CD8-positive, alpha-beta T cell (primary cell): ENCODE measurements at regions of chr11 and their contacts with region 1.

Region 1: DNA sequence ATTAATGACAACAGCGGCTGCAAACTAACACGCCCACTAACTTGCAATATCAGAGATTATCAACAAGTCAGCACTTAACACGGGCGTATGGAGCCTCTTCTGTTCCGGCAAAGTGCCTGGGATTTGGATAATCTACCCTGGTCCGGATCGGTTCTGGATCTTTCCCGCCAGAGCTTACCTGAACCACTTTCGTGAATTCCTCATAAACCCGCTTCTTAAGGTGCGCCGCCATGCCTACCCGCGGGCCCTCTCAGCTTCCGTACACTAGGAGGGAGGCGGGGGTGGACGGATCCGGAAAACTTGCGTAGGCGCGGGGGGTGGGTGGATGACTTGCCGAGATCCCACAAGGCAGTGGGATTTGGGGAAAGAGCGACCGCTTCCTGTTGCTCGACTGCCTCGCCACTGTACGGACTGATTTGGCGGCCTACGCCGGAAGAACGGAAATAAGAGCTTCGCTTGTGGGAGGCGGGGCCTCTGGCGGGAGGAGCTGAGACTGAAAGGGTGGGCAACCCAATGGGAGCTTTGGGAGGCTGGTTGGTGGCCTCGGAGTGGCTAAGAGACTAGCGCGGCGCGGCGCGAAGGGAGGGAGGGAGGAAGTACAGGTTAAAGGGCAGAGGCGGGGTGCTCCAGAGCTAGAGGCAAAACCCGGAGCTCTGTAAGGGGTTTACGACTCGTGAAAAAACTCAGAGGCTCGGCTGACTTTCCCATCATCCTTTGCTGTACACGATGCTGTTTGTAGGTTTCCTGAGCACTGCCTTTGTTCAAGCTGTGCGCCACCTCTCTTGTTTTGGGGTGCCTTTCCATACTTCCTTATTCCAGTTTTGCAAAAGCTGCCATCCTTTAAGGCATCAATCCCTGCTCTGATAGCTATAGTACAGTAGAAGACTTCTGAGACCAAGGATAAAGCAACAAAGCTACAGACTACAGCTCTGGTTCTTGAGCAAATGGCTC is at the start of gene INTS4:
- DNase-seq: peak; percentile 92 to 99 (median 97)
- ATAC-seq: peak; percentile 97
- H3K4me3 ChIP-seq: peak within 1 kb of the TSS; percentile 79 to 81
- H3K4me3 Mint-ChIP-seq: peak within 1 kb of the TSS; percentile 96
- H3K27ac ChIP-seq: peak within 1 kb of the TSS; percentile 75 to 91
- H3K27ac Mint-ChIP-seq: peak within 1 kb of the TSS; percentile 99
- H3K4me1 ChIP-seq: peaks cover 22% of the 10 kb centered on the region
- H3K4me1 Mint-ChIP-seq: peaks cover 30% of the 10 kb centered on the region
- H3K27me3 ChIP-seq: no peaks in the 10 kb centered on the region
- H3K27me3 Mint-ChIP-seq: no peaks in the 10 kb centered on the region
- CTCF ChIP-seq: no peak
- total RNA-seq, gene INTS4: 39.4 to 49.0 TPM

Region 2: GRCh38 chr11:76860539-76861475 is 1133.9 kb before region 1 on chr11 and contains the start of gene ACER3:
- CTCF ChIA-PET with region 1: no interaction called
- POLR2A ChIA-PET with region 1: no interaction called
- intact Hi-C with region 1: loop called in 1 of 2 experiments (anchors 10 kb)
- DNase-seq: peak; percentile 38 to 92 (median 76)
- ATAC-seq: peak; percentile 96
- H3K4me3 ChIP-seq: peak within 1 kb of the TSS; percentile 63 to 82
- H3K4me3 Mint-ChIP-seq: peak within 1 kb of the TSS; percentile 90
- H3K27ac ChIP-seq: peak within 1 kb of the TSS; percentile 37 to 60
- H3K27ac Mint-ChIP-seq: peak within 1 kb of the TSS; percentile 87
- H3K4me1 ChIP-seq: peaks cover 21% of the 10 kb centered on the region
- H3K4me1 Mint-ChIP-seq: peaks cover 31% of the 10 kb centered on the region
- H3K27me3 ChIP-seq: no peaks in the 10 kb centered on the region
- H3K27me3 Mint-ChIP-seq: no peaks in the 10 kb centered on the region
- CTCF ChIP-seq: no peak
- total RNA-seq, gene ACER3: 5.0 to 5.8 TPM

Region 3: GRCh38 chr11:77560590-77560989 is 434.1 kb before region 1 on chr11:
- CTCF ChIA-PET with region 1: no interaction called
- POLR2A ChIA-PET with region 1: no interaction called
- intact Hi-C with region 1: no loop called
- DNase-seq: no peak
- ATAC-seq: no peak
- H3K4me3 ChIP-seq: no peak overlapping the region
- H3K4me3 Mint-ChIP-seq: no peak overlapping the region
- H3K27ac ChIP-seq: no peak overlapping the region
- H3K27ac Mint-ChIP-seq: no peak overlapping the region
- H3K4me1 ChIP-seq: no peaks in the 10 kb centered on the region
- H3K4me1 Mint-ChIP-seq: no peaks in the 10 kb centered on the region
- H3K27me3 ChIP-seq: no peaks in the 10 kb centered on the region
- H3K27me3 Mint-ChIP-seq: no peaks in the 10 kb centered on the region
- CTCF ChIP-seq: no peak

Region 4: GRCh38 chr11:77637345-77638165 is 357.1 kb before region 1 on chr11 and contains the start of gene CLNS1A:
- CTCF ChIA-PET with region 1: no interaction called
- POLR2A ChIA-PET with region 1: interaction called, 7 read pairs
- intact Hi-C with region 1: loop called in 1 of 2 experiments (anchors 2 kb)
- DNase-seq: peak; percentile 51 to 88 (median 81)
- ATAC-seq: peak; percentile 99
- H3K4me3 ChIP-seq: peak within 1 kb of the TSS; percentile 88 to 91
- H3K4me3 Mint-ChIP-seq: peak within 1 kb of the TSS; percentile 95
- H3K27ac ChIP-seq: peak within 1 kb of the TSS; percentile 62 to 80
- H3K27ac Mint-ChIP-seq: peak within 1 kb of the TSS; percentile 97
- H3K4me1 ChIP-seq: peaks cover 26% of the 10 kb centered on the region
- H3K4me1 Mint-ChIP-seq: peaks cover 43% of the 10 kb centered on the region
- H3K27me3 ChIP-seq: no peaks in the 10 kb centered on the region
- H3K27me3 Mint-ChIP-seq: no peaks in the 10 kb centered on the region
- CTCF ChIP-seq: no peak
- total RNA-seq, gene CLNS1A: 84.6 to 87.5 TPM

Region 5: GRCh38 chr11:77658213-77659013 is 336.3 kb before region 1 on chr11:
- CTCF ChIA-PET with region 1: no interaction called
- POLR2A ChIA-PET with region 1: no interaction called
- intact Hi-C with region 1: no loop called
- DNase-seq: no peak
- ATAC-seq: no peak
- H3K4me3 ChIP-seq: no peak overlapping the region
- H3K4me3 Mint-ChIP-seq: no peak overlapping the region
- H3K27ac ChIP-seq: no peak overlapping the region
- H3K27ac Mint-ChIP-seq: no peak overlapping the region
- H3K4me1 ChIP-seq: no peaks in the 10 kb centered on the region
- H3K4me1 Mint-ChIP-seq: no peaks in the 10 kb centered on the region
- H3K27me3 ChIP-seq: no peaks in the 10 kb centered on the region
- H3K27me3 Mint-ChIP-seq: no peaks in the 10 kb centered on the region
- CTCF ChIP-seq: no peak

Region 6: GRCh38 chr11:78079232-78080083 is 84.8 kb after region 1 on chr11 and contains the start of gene NDUFC2:
- CTCF ChIA-PET with region 1: interaction called, 3 read pairs
- POLR2A ChIA-PET with region 1: interaction called, 19 read pairs
- intact Hi-C with region 1: loop called in 1 of 2 experiments (anchors 1 kb)
- DNase-seq: peak; percentile 30 to 83 (median 66)
- ATAC-seq: peak; percentile 82
- H3K4me3 ChIP-seq: peak within 1 kb of the TSS; percentile 74 to 97
- H3K4me3 Mint-ChIP-seq: peak within 1 kb of the TSS; percentile 96
- H3K27ac ChIP-seq: peak within 1 kb of the TSS; percentile 76 to 78
- H3K27ac Mint-ChIP-seq: peak within 1 kb of the TSS; percentile 96
- H3K4me1 ChIP-seq: peaks cover 56% of the 10 kb centered on the region
- H3K4me1 Mint-ChIP-seq: peaks cover 63% of the 10 kb centered on the region
- H3K27me3 ChIP-seq: no peaks in the 10 kb centered on the region
- H3K27me3 Mint-ChIP-seq: no peaks in the 10 kb centered on the region
- CTCF ChIP-seq: no peak
- total RNA-seq, gene NDUFC2: 72.2 to 76.3 TPM

Region 7: DNA sequence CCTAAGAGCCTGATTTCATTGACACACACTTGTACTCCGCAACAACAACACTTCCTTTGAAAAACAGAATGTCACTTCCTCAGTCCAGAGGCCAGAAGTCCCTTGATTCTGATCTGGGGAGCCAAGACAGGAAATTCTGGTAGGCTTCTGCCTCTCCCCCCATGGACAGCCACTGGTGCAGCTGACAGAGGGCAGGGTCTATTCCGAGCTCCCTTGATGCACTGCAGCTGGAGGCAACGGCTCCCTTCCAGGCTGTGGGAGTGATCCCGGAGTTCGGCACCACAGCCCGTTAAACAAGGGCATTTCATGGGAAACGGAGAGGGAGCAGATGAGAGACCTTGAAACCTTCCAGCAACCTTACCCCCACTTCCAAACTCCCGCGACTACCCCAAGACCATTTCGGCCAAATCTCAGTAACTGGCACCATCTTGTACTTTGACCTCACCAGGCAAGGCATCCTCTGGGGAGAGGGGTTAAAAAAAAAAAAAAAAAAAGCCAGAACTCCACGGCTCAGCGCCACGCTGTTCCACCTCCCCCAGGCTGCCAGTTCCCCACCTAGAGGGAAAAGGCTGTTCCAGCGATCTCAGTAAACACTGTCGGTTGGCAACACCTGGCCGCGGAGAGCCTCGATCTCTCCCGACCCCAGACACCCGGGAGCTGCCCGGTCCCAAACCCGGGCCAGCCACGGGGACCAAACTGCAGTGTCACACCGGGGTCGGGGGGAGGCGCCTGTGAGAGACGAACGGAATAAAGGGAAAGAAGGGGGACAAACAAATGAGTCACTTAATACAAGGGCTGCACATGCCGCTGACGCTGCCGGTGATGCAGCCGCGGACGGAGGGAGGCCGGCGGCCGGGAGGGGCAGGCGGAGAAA is 421.9 kb after region 1 on chr11:
- CTCF ChIA-PET with region 1: no interaction called
- POLR2A ChIA-PET with region 1: no interaction called
- intact Hi-C with region 1: loop called (anchors 2 to 5 kb)
- DNase-seq: peak; percentile 38 to 84 (median 78)
- ATAC-seq: peak; percentile 74
- H3K4me3 ChIP-seq: peak overlapping the region; percentile 52 to 57
- H3K4me3 Mint-ChIP-seq: peak overlapping the region; percentile 91
- H3K27ac ChIP-seq: peak overlapping the region in 1 of 2 experiments; percentile 26
- H3K27ac Mint-ChIP-seq: peak overlapping the region; percentile 90
- H3K4me1 ChIP-seq: peaks cover 12% of the 10 kb centered on the region
- H3K4me1 Mint-ChIP-seq: peaks cover 29% of the 10 kb centered on the region
- H3K27me3 ChIP-seq: no peaks in the 10 kb centered on the region
- H3K27me3 Mint-ChIP-seq: peaks cover 23% of the 10 kb centered on the region
- CTCF ChIP-seq: peak; percentile 65